Adrenal gland (tissue), 19 donors: ENCODE measurements at regions of chr13 and their contacts with region 1.

Region 1: DNA sequence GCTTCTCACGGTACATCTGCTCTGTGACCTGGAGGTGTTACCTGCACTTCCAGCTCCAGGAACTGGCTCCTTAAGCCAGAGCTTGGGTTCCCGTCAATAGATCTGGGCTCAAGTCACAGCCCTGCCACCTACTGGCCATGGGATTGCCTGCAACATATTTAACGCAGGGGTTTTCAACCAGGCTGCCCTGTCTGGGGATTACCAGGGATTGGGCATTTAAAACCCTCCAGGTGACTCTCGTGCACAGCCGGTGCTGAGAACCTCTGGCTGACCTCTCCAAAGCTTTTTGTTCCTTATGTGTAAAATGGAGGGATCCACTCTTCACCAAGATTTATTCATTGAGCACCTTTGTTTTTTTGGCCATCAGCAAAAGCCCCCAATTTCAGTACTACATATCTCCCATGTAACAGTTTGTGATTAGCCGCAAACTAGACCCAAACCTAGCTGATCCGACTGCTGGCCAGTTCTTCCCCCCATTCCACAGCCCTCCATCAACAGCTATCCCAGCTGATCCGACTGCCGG is 76.6 kb upstream of the STK24 start:
- DNase-seq: peak; percentile 70 to 92 (median 82)
- H3K4me3 ChIP-seq: no peak overlapping the region
- H3K27ac ChIP-seq: no peak overlapping the region
- H3K4me1 ChIP-seq: no peaks in the 10 kb centered on the region
- H3K27me3 ChIP-seq: no peaks in the 10 kb centered on the region
- CTCF ChIP-seq: peak; percentile 77 to 93 (median 86)
- POLR2A ChIP-seq: no peak

Region 2: DNA sequence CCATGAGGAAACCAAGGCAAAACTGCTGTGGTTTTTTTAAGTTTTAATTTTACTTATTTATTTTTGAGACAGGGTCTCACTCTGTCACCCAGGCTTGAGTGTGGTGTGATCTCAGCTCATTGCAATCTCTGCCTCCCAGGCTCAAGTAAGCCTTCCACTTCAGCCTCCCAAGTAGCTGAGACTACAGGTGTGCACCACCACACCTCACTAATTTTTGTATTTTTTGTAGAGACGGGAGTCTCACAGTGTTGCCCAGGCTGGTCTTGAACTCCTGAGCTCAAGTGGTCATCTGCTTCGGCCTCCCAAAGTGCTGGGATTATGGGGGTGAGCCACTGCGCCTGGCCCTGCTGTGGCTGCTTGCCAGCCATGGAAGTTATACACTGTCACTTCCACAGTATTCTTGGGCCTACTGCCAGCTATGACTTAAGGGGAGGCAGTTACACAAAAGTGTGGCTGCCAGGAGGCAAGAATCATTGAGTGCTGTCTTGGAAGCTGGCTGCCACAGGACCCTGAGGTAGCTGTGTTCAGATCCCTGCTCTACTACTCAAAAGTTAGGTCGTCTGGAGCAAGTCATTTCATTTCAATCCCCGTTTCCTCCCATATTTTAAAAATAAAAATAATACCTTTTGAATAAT is 497.9 kb before region 1 on chr13:
- intact Hi-C with region 1: no loop called
- DNase-seq: peak in 6 of 7 donors; percentile 35 to 69 (median 60)
- H3K4me3 ChIP-seq: no peak overlapping the region
- H3K27ac ChIP-seq: no peak overlapping the region
- H3K4me1 ChIP-seq: peaks cover 13 to 25% of the 10 kb centered on the region in 2 donors
- H3K27me3 ChIP-seq: no peaks in the 10 kb centered on the region
- CTCF ChIP-seq: no peak
- POLR2A ChIP-seq: no peak

Region 3: DNA sequence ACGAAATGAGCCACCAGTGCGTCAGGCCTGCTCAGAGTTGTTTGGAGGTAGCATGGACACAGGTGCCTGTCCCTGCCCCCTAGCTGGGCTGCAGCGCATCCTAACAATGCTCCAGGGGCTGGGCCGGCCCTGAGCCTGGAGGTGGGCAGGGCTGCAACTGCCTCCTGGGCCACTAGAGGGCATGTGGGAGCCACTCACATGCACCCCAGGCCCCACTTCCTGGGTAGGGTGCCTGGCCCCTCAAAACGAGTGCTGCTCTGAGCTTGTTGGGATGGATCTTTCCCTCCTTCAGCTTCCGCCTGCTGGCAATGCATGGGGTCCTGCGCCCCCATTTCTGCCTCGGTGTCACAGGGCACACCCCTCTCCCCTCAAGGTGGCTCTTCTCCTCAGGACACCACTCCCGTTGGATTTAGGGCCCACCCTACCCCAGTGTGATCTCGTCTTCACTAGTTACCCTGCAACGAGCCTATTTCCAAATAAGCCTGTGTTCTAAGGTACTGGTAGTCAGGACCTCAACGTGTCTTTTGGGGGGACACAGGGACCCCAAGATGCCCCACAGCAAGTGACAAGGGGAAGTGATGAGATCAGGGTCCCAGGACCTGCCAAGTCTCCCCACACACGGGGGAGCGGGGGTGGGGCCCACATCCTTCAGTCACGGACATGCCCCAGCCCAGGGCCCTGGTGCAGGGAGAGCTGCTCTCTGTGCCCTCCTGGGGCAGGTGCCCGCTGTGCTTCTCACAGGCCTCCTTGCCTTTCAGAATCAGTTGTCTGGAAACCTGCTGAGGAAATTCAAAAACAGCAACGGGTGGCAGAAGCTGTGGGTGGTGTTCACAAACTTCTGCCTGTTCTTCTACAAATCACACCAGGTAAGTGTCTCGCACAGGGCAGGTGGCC is 207.9 kb before region 1 on chr13:
- intact Hi-C with region 1: loop called (anchors 5 kb)
- DNase-seq: peak; percentile 43 to 84 (median 66)
- H3K4me3 ChIP-seq: no peak overlapping the region
- H3K27ac ChIP-seq: peak overlapping the region in 2 of 5 donors; percentile 20 to 36
- H3K4me1 ChIP-seq: peaks cover 0 to 4% of the 10 kb centered on the region in 2 donors
- H3K27me3 ChIP-seq: no peaks in the 10 kb centered on the region
- CTCF ChIP-seq: peak; percentile 91 to 97 (median 94)
- POLR2A ChIP-seq: no peak

Region 4: DNA sequence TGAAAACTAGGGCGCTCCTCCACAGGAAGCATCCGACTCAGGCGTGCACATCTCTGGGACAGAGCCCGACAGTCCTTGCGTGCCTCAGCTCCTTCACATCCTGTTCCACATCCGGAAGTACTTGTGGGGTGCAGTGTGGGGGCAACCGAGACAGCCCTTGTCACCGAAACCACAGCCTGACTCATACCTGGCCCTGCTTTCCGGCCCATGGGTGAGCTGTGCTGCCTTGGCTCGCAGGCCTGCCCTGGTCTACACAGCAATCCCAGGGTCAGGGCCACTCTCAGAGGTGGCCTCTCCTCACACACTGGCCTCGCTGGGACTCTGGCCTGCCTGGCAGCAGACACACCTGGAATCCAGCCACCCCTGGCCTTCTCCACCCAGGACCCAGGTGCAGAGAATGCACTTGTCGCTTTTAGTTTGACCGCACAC is 177.0 kb before region 1 on chr13:
- intact Hi-C with region 1: loop called in 1 of 2 experiments (anchors 10 kb)
- DNase-seq: peak in 6 of 7 donors; percentile 50 to 81 (median 65)
- H3K4me3 ChIP-seq: no peak overlapping the region
- H3K27ac ChIP-seq: peak overlapping the region in 3 of 5 donors; percentile 20 to 71 (median 57)
- H3K4me1 ChIP-seq: peaks cover 4 to 39% of the 10 kb centered on the region in 2 donors
- H3K27me3 ChIP-seq: no peaks in the 10 kb centered on the region
- CTCF ChIP-seq: no peak
- POLR2A ChIP-seq: no peak